BJ (cell line): ENCODE measurements at regions of chr9 and their contacts with region 1.

Region 1: GRCh38 chr9:70602321-70603019 is 188.0 kb upstream of the KLF9 start:
- DNase-seq: peak; percentile 54
- H3K4me3 ChIP-seq: 0 out of 2 replicates have a peak overlapping the region, but pooled peaks have one; percentile 5
- H3K27me3 ChIP-seq: no peaks in the 10 kb centered on the region
- CTCF ChIP-seq: peak; percentile 68

Region 2: DNA sequence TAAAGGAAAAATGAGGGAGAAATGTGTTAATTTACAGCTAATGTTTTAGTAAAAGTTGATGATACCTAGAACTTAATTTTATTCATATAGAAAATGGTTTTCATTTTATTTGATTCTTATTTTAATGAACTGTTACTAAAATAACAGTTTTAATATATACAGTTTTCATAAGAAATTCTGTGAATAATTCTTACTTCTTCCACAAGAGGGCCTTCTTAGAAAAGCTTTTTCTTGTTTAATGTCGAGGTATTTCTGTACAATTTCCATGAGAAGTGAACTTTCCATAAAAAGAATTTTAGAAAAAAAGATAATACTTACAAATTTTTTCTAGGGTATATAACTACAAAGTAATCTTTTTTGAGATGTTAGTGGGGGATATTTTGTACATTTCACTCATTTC is 261.9 kb before region 1 on chr9:
- CTCF ChIA-PET with region 1: interaction called, 56 read pairs
- POLR2A ChIA-PET with region 1: interaction called, 3 read pairs
- DNase-seq: peak; percentile 8
- H3K4me3 ChIP-seq: no peak overlapping the region
- H3K27me3 ChIP-seq: no peaks in the 10 kb centered on the region
- CTCF ChIP-seq: peak; percentile 41; the same call in 1 of the 2 replicates

Region 3: GRCh38 chr9:70347046-70347445 is 255.4 kb before region 1 on chr9:
- CTCF ChIA-PET with region 1: interaction called, 18 read pairs
- POLR2A ChIA-PET with region 1: no interaction called
- DNase-seq: no peak
- H3K4me3 ChIP-seq: no peak overlapping the region
- H3K27me3 ChIP-seq: no peaks in the 10 kb centered on the region
- CTCF ChIP-seq: no peak

Region 4: GRCh38 chr9:70352356-70352755 is 250.1 kb before region 1 on chr9:
- CTCF ChIA-PET with region 1: interaction called, 18 read pairs
- POLR2A ChIA-PET with region 1: no interaction called
- DNase-seq: peak; percentile 18
- H3K4me3 ChIP-seq: no peak overlapping the region
- H3K27me3 ChIP-seq: no peaks in the 10 kb centered on the region
- CTCF ChIP-seq: no peak

Region 5: DNA sequence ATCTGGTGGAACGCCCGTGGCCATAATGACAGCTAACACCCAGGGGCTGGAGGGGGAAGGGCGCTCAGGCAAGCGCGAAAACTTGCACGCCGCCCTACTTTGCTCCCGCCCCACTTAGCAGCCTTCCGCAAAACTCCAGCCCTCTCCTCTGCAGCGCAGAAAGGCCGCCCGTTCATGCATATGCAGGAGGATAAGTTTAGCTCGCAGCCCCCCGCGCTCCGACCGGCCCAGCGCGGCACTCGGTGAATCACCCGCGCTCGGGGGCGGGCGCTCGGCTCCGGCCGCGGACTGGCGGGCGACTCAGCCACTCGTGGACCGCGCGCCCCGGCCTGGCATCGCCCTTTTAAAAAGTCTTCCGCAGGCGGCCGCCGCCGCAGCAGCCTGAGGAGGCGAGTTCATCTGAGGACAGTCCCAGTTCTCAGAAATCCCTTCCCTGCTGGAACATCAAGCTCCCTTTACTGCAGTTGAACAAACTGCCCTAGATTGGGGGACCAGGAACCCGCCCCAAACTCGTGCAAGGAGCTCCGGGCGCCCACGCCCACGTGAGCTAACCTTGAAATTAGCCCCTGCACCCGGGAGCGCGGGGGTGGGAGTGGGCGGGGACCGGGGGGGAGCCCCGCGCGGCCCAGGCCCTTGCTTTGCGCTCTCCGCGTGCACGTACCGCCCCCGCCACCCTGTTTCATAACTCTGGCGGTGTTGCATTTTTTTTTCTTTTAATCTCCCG is 183.5 kb before region 1 on chr9:
- CTCF ChIA-PET with region 1: interaction called, 31 read pairs
- POLR2A ChIA-PET with region 1: interaction called, 6 read pairs
- DNase-seq: peak; percentile 93
- H3K4me3 ChIP-seq: peak overlapping the region; percentile 50
- H3K27me3 ChIP-seq: no peaks in the 10 kb centered on the region
- CTCF ChIP-seq: no peak

Region 6: DNA sequence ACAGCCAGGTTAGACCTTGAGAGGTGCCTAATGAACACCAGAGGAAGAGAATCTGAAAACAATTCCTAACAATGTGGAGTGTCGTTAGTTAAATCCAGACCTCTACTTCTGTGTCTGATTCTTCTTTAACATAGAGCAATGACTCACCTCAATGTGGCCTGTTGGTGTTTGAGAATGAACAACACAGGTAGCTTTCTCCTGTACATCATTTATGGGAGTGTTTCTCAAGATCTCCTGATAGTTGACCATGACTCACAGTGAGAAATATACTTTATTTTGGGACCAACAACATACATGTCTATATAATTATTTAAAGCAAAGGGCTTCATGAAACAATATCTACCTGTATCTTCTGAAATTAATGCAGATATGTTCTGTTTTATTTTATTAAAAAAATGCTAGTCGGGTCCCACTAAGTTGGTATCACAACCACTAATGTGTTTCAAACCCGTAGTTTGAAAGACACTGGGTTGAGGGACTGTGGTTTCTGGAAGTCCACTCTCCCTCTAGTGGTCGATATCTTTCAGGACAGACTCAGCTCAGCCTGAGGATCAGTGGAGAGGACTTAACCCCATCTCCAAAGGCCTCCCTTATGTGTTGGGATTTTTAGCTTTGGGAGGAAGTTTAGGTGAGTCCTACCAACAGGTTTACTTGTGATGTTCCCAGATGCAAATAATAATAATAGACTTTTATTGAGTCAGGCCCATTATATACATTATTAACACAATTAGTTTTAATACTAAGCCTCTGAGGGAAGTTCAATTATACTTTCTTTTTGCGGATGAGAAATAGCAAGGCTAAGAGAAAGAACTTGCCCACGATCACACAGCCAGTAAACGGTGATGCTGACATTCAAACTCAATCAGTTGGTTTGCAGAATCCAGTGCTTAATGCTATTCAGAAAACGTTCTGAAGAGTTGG is 118.0 kb before region 1 on chr9:
- CTCF ChIA-PET with region 1: interaction called, 14 read pairs
- POLR2A ChIA-PET with region 1: no interaction called
- DNase-seq: no peak
- H3K4me3 ChIP-seq: no peak overlapping the region
- H3K27me3 ChIP-seq: no peaks in the 10 kb centered on the region
- CTCF ChIP-seq: peak; percentile 80

Region 7: DNA sequence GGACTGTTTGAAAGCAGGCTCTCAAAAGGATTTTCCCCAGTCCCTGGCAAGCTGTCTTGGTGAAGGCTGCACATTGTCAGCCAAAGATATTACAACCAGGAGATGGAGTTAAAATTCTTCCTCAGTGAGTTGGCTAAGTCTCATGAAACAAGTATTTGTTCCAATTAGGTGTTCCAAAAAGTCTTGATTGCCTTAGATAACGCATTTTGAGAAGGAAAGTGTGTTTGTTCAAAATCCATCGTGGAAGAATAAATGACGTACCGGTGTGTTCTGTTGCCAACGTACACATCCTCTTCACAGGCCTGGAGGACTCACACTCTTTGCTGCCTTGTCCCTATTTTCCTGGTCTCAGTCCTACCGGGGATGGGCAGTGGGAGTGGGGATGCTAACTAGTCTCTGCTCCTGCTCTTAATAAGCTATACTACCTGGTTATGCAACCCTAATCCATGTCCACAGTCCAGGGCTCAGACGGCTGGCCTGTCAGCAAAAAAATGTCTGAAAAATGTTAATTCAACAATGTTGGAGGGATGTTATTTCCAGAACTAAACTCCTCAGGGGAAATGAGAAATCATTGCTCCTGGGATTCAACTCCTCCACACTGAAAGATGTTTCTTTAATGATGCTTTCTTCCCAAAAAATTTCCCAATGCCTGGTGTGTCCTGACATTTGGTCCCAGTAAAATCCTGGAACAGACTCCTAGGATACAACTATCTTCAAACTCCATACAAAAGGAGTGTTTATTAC is 12.7 kb before region 1 on chr9:
- CTCF ChIA-PET with region 1: interaction called, 11 read pairs
- POLR2A ChIA-PET with region 1: no interaction called
- DNase-seq: peak; percentile 83
- H3K4me3 ChIP-seq: no peak overlapping the region
- H3K27me3 ChIP-seq: no peaks in the 10 kb centered on the region
- CTCF ChIP-seq: no peak

Region 8: DNA sequence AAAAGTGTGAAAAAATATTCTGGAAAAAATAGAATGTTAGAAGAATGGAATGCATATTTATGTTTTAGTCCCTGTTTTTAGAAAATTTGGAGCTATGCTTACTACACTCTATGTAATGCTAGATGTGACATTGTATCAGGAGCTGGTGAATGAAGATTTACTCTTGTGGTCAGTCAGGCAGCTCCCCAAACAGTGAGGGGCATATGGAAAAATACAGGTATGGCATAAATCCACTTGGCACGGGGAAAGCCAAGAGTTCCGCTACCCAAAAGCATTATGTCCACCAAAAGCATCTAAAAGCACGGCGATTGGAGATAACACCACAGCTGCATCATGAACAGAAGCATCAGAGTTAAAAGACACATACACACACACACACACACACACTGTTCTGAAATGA is 32.2 kb after region 1 on chr9:
- CTCF ChIA-PET with region 1: no interaction called
- POLR2A ChIA-PET with region 1: no interaction called
- DNase-seq: no peak
- H3K4me3 ChIP-seq: no peak overlapping the region
- H3K27me3 ChIP-seq: no peaks in the 10 kb centered on the region
- CTCF ChIP-seq: no peak